ENCODE measurements at regions of chr10 and their contacts with region 1.

Region 1: GRCh38 chr10:114043532-114044246 is at the start of gene ADRB1:
- DNase-seq: peak; percentile 86 to 88
- H3K4me3 ChIP-seq: peak within 1 kb of the TSS; percentile 75
- H3K4me3 Mint-ChIP-seq: peak within 1 kb of the TSS; percentile 80
- H3K27ac Mint-ChIP-seq: no peak within 1 kb of the TSS
- H3K4me1 ChIP-seq: peaks cover 8% of the 10 kb centered on the region
- H3K4me1 Mint-ChIP-seq: peaks cover 9% of the 10 kb centered on the region
- H3K27me3 ChIP-seq: no peaks in the 10 kb centered on the region
- H3K27me3 Mint-ChIP-seq: peaks cover 21% of the 10 kb centered on the region
- CTCF ChIP-seq: no peak
- total RNA-seq, gene ADRB1: 2.1 and 2.3 TPM in 2 replicates

Region 2: GRCh38 chr10:113742466-113742865 is 301.2 kb before region 1 on chr10:
- CTCF ChIA-PET with region 1: no interaction called
- POLR2A ChIA-PET with region 1: interaction called, 14 read pairs
- intact Hi-C with region 1: no loop called
- DNase-seq: no peak
- H3K4me3 ChIP-seq: no peak overlapping the region
- H3K4me3 Mint-ChIP-seq: no peak overlapping the region
- H3K27ac Mint-ChIP-seq: no peak overlapping the region
- H3K4me1 ChIP-seq: peaks cover 15% of the 10 kb centered on the region
- H3K4me1 Mint-ChIP-seq: peaks cover 14% of the 10 kb centered on the region
- H3K27me3 ChIP-seq: no peaks in the 10 kb centered on the region
- H3K27me3 Mint-ChIP-seq: no peaks in the 10 kb centered on the region
- CTCF ChIP-seq: no peak

Region 3: GRCh38 chr10:113897693-113898618 is 145.7 kb before region 1 on chr10:
- CTCF ChIA-PET with region 1: no interaction called
- POLR2A ChIA-PET with region 1: no interaction called
- intact Hi-C with region 1: loop called (anchors 10 kb)
- DNase-seq: no peak
- H3K4me3 ChIP-seq: no peak overlapping the region
- H3K4me3 Mint-ChIP-seq: no peak overlapping the region
- H3K27ac Mint-ChIP-seq: no peak overlapping the region
- H3K4me1 ChIP-seq: peaks cover 27% of the 10 kb centered on the region
- H3K4me1 Mint-ChIP-seq: peaks cover 24% of the 10 kb centered on the region
- H3K27me3 ChIP-seq: no peaks in the 10 kb centered on the region
- H3K27me3 Mint-ChIP-seq: no peaks in the 10 kb centered on the region
- CTCF ChIP-seq: no peak

Region 4: DNA sequence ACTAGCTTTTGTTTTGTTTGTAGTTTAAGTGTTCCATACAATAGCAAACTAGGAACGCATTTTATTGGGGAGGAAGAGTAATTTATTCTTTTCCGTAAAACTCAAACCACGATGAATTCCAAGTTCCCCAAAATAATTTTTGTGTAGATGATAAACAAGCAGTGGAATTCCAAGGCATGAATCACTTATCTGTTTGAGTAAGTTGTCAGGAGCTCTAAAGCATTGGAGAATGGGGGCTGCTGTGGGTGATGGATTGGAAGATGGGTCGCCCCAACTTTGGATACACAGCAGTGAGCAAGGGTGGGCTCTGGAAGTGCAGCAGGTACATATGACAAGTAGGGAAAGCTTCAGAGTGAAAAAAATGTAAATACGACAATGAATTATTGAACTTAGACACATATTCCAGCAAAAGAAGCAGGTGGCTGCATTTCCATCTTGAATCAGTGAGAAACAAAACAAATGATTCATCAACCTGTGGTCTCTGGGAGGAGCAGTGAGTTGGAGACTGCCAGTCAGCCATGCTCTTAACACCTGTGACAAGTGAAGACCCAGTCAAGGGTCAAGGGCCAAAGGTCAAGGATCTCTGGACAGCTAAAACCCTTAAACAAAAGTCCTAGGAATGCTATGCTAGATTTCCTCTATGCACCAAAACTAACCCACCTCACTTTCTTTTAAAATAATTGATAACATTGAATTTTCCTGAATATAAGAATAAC is 34.2 kb before region 1 on chr10:
- CTCF ChIA-PET with region 1: no interaction called
- POLR2A ChIA-PET with region 1: no interaction called
- intact Hi-C with region 1: no loop called
- DNase-seq: no peak
- H3K4me3 ChIP-seq: no peak overlapping the region
- H3K4me3 Mint-ChIP-seq: no peak overlapping the region
- H3K27ac Mint-ChIP-seq: no peak overlapping the region
- H3K4me1 ChIP-seq: no peaks in the 10 kb centered on the region
- H3K4me1 Mint-ChIP-seq: no peaks in the 10 kb centered on the region
- H3K27me3 ChIP-seq: no peaks in the 10 kb centered on the region
- H3K27me3 Mint-ChIP-seq: peaks cover 3% of the 10 kb centered on the region
- CTCF ChIP-seq: no peak